ENCODE measurements at regions of chr12 and their contacts with region 1.

Region 1: DNA sequence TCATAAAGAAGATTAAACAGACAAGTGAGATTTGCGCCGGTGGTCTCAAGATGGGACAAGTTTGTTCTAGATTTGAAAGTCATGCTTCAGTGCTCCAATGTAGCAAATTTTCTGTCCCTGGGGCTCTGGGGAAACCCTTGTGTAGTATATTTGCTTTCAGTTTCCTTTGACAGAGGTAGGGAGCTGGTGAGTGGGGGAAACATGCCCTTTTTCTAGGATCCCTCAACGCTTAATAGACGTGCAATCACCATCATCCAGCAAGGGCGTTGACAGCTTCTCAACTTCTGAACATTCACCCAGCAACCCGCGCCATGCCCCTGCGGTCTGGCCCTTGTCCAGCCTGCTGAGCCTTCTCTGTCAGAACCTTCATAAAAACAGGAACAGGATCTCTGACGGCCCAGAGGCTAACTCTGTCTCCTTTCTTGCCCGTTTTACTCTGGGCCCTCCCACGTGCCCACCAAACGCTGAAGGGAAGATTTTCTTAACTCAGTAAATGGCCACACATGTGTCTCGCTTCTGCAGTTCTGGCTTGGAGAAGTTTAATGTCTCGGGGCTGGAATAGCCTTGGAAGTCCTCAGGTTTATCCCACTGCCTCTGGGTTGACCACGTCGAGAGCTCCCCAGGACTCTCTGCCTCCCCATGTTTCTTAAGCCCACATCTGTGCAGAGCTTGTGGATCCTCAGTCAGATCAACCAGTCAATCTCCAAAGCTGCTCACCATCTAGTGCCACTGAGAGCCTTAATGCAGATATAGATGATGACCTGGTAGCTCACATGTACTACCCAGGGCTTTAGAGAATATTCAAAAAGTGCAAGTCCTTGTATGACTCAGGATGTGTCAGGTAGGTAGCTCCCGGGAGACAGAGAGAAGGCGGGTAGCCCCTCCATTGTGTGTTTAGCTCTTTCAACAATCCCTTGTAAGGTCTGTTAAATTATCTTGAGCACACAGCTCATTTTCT is 58.1 kb upstream of the CCND2 start:
- DNase-seq: peak; percentile 81
- H3K4me3 Mint-ChIP-seq: peak overlapping the region; percentile 72
- H3K27ac Mint-ChIP-seq: peak overlapping the region; percentile 82
- H3K4me1 Mint-ChIP-seq: peaks cover 46% of the 10 kb centered on the region
- H3K27me3 Mint-ChIP-seq: peaks cover 2% of the 10 kb centered on the region

Region 2: GRCh38 chr12:4154672-4155225 is 60.8 kb before region 1 on chr12:
- intact Hi-C with region 1: loop called (anchors 2 kb)
- DNase-seq: no peak
- H3K4me3 Mint-ChIP-seq: peak overlapping the region; percentile 12
- H3K27ac Mint-ChIP-seq: peak overlapping the region; percentile 97
- H3K4me1 Mint-ChIP-seq: peaks cover 82% of the 10 kb centered on the region
- H3K27me3 Mint-ChIP-seq: no peaks in the 10 kb centered on the region

Region 3: GRCh38 chr12:4228122-4228580 is 12.6 kb after region 1 on chr12:
- intact Hi-C with region 1: no loop called
- DNase-seq: no peak
- H3K4me3 Mint-ChIP-seq: no peak overlapping the region
- H3K27ac Mint-ChIP-seq: no peak overlapping the region
- H3K4me1 Mint-ChIP-seq: peaks cover 10% of the 10 kb centered on the region
- H3K27me3 Mint-ChIP-seq: peaks cover 3% of the 10 kb centered on the region

Measured in activated CD4-positive, alpha-beta T cell treated with anti-CD3 and anti-CD28 coated beads, Interleukin-2, amount 10 ng/mL, durations not matched to agents 24 days and 14 days (primary cell).